Mucosa of descending colon (tissue), 3 donors: ENCODE measurements at regions of chr4 and their contacts with region 1.

Region 1: DNA sequence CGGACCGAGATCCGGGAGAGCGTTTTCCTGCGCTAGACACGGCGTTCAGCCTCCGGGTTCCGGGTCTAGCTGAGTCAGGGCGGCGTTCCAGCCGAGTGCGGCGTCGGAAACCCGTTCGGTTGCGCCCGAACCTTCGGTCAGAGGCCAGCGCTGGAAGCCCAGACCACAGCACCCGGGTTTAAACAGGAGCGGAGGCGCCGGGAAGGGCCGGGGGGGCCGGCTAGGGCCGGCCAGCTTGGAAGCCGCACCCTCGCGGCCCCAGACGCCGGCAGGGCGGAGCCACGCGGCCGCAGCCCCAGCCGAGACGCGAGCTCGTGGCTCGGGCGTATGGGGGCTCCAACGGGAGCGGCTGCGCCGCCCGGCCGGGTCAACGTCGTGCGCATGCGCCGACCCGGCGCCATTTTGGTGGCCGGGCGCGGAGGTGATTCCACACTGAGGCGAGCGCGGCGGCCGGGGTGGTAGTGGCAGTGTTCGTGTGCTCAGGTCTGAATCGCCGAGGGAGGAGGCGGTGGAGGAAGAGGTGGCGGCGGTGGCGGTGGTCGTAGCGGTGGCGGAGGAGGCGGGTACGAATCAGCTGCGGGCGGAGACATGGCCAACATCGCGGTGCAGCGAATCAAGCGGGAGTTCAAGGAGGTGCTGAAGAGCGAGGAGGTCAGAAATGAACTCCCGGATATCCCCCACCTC is at the start of gene UBE2K:
- DNase-seq: peak; percentile 87 to 94 (median 93)
- ATAC-seq: peak; percentile 97
- H3K4me3 ChIP-seq: peak within 1 kb of the TSS; percentile 83
- H3K4me1 ChIP-seq: peaks cover 16% of the 10 kb centered on the region
- CTCF ChIP-seq: no peak
- total RNA-seq, gene UBE2K: 82.0 to 89.0 (median 86.7) TPM

Region 2: GRCh38 chr4:39801975-39802374 is 104.1 kb after region 1 on chr4:
- intact Hi-C with region 1: no loop called
- DNase-seq: no peak
- ATAC-seq: no peak
- H3K4me3 ChIP-seq: no peak overlapping the region
- H3K4me1 ChIP-seq: no peaks in the 10 kb centered on the region
- CTCF ChIP-seq: no peak

Region 3: DNA sequence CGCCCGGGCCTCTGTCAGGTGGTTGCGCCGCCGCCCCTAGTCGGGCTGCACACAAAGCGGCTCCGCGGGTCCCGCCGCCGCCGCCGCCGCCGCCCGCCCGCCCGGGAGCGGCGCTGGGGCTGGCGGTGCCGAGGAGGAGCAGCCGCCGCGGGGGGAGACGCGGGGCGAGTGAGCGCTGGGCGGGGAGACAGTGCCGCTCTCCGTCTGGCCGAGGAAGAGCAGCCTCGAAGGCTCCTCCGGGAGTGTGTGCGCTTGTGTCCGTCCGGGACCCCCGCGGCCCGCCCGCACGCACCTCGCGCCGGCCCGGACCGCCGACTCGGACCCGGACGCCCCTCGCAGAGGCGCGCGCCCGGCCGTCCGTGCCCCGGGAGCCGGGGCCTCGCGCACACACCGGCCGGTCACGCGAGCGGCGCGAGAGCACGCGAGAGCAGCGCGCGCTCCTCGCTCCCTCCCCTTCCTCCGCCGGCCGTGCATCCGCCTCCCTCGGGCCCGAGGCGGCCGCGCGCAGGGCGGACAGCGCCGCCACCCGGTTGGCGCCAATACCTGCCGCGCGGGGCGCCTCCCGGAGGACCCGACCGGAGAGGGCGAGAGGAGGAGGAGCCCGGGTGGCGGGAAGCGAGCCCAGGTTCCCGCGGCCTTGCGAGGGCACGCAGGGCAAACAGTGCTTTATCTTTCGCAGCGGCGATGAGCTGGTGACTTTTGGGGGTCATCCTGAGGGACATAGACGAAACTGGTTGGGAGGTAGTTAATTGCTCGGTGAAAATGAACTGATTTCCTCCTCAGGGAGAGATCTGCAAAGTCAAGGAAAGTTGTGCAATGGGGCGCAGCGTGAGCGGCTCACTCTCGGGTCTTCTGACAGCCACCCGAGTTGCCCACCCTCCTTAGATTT is 279.9 kb after region 1 on chr4 and contains the start of gene PDS5A:
- intact Hi-C with region 1: loop called in 1 of 2 experiments (anchors 10 kb)
- DNase-seq: peak; percentile 86 to 95 (median 93)
- ATAC-seq: peak; percentile 95
- H3K4me3 ChIP-seq: peak within 1 kb of the TSS; percentile 78
- H3K4me1 ChIP-seq: peaks cover 11% of the 10 kb centered on the region
- CTCF ChIP-seq: peak; percentile 94
- total RNA-seq, gene PDS5A: 53.4 to 68.3 (median 64.7) TPM